Adrenal gland (tissue), 19 donors: ENCODE measurements at regions of chr17 and their contacts with region 1.

Region 1: GRCh38 chr17:7915611-7916382 is at the start of gene RNF227:
- DNase-seq: peak; percentile 89 to 96 (median 92)
- H3K4me3 ChIP-seq: peak within 1 kb of the TSS in 3 of 4 donors; percentile 18 to 55 (median 33)
- H3K27ac ChIP-seq: peak within 1 kb of the TSS in 4 of 5 donors; percentile 81 to 96 (median 88)
- H3K4me1 ChIP-seq: peaks cover 10 to 25% of the 10 kb centered on the region in 2 donors
- H3K27me3 ChIP-seq: no peaks in the 10 kb centered on the region
- CTCF ChIP-seq: peak in 1 of 6 experiments; percentile 9
- POLR2A ChIP-seq: peak; percentile 32 to 37
- total RNA-seq, gene RNF227: 1.1 to 17.3 (median 2.9) TPM

Region 2: DNA sequence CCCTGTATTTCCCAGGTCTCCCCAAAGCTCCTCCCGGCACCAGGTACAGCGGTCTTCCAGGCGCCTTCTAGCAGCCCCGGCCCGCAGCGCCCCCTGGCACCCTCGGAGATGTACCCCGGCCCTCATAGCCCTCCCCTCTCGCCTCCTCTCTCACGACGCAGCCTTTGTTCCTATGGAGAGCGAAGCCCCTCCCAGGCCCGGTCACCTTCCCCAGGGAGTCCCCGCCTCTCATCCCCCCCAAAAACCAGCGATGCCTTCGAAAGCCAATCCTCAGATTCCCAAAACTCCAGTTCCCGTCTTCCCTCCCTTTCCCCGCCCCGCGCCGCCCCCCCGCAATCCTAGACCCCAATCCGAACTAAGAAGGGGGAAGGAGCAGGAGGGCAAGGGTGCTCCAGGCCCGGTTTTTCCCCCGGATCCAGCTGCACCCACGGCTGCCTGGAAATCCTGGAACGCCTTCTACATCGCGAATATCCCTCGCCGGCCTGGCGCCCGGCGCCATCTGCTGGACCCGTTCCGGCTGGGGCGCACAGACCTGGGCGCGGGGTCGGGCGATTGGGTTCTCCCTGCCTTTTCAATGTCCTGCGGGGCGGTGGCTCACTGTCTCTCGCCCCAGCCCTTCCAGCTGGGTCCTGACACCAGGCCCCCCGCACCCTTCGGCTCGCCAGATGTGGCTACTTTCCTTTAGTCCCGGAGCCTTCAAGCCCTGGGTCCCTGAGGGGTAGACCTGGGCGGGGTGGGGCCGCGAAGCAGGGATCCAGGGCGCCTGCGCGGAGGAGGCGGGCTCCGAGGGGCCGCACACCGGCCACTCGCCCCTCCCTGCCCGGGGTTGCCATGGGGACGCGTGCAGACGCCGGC is 198.7 kb before region 1 on chr17 and contains the start of gene DNAH2:
- intact Hi-C with region 1: no loop called
- DNase-seq: peak; percentile 63 to 88 (median 79)
- H3K4me3 ChIP-seq: peak within 1 kb of the TSS in 2 of 4 donors; percentile 20 to 65
- H3K27ac ChIP-seq: peak within 1 kb of the TSS in 1 of 5 donors; percentile 36
- H3K4me1 ChIP-seq: peaks cover 11 to 14% of the 10 kb centered on the region in 2 donors
- H3K27me3 ChIP-seq: peaks cover 6% of the 10 kb centered on the region
- CTCF ChIP-seq: peak; percentile 20 to 53 (median 43)
- POLR2A ChIP-seq: peak in 1 of 2 donors; percentile 70
- total RNA-seq, gene DNAH2: 0.04 to 0.26 (median 0.11) TPM

Region 3: GRCh38 chr17:8044819-8045810 is 129.3 kb after region 1 on chr17:
- intact Hi-C with region 1: no loop called
- DNase-seq: peak in 1 of 7 donors; percentile 7
- H3K4me3 ChIP-seq: no peak overlapping the region
- H3K27ac ChIP-seq: no peak overlapping the region
- H3K4me1 ChIP-seq: no peaks in the 10 kb centered on the region
- H3K27me3 ChIP-seq: peaks cover 5% of the 10 kb centered on the region
- CTCF ChIP-seq: no peak
- POLR2A ChIP-seq: no peak

Region 4: DNA sequence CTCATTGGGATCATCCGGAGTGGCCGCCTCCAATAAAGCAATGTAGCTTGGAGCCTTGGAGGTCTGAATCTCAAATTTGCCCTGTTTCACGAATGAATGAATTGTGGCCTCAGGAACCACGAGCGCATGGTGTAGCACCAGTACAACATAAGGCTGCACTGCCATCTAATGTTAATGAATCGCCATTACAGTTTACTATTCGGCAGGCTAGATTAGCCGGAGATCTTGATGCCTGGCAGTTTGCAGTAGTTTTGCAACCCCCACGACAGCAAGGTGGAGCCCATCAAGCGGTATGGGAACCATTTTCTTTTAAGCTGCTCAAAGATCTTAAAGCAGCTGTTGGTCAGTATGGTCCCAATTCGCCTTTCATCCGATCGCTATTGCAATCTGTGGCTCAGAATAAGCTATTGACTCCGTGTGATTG is 141.9 kb after region 1 on chr17:
- intact Hi-C with region 1: loop called in 1 of 2 experiments (anchors 5 kb)
- DNase-seq: peak in 6 of 7 donors; percentile 49 to 76 (median 58)
- H3K4me3 ChIP-seq: no peak overlapping the region
- H3K27ac ChIP-seq: no peak overlapping the region
- H3K4me1 ChIP-seq: no peaks in the 10 kb centered on the region
- H3K27me3 ChIP-seq: peaks cover 13% of the 10 kb centered on the region
- CTCF ChIP-seq: peak; percentile 49 to 82 (median 77)
- POLR2A ChIP-seq: no peak